ENCODE measurements at regions of chr10 and their contacts with region 1.

Region 1: GRCh38 chr10:5873515-5873995 is 16.1 kb downstream of the ANKRD16 start:
- DNase-seq: peak; percentile 39 to 81 (median 58)
- ATAC-seq: peak; percentile 99
- H3K4me3 ChIP-seq: no peak overlapping the region
- H3K4me3 Mint-ChIP-seq: peak overlapping the region; percentile 12
- H3K27ac ChIP-seq: no peak overlapping the region
- H3K27ac Mint-ChIP-seq: no peak overlapping the region
- H3K4me1 ChIP-seq: no peaks in the 10 kb centered on the region
- H3K4me1 Mint-ChIP-seq: peaks cover 6% of the 10 kb centered on the region
- H3K27me3 ChIP-seq: no peaks in the 10 kb centered on the region
- H3K27me3 Mint-ChIP-seq: no peaks in the 10 kb centered on the region
- CTCF ChIP-seq: peak; percentile 68

Region 2: GRCh38 chr10:5441106-5441505 is 432.4 kb before region 1 on chr10:
- CTCF ChIA-PET with region 1: interaction called, 3 read pairs
- POLR2A ChIA-PET with region 1: no interaction called
- intact Hi-C with region 1: loop called (anchors 1 to 5 kb)
- DNase-seq: no peak
- ATAC-seq: no peak
- H3K4me3 ChIP-seq: no peak overlapping the region
- H3K4me3 Mint-ChIP-seq: no peak overlapping the region
- H3K27ac ChIP-seq: no peak overlapping the region
- H3K27ac Mint-ChIP-seq: no peak overlapping the region
- H3K4me1 ChIP-seq: peaks cover under 1% of the 10 kb centered on the region
- H3K4me1 Mint-ChIP-seq: peaks cover 20% of the 10 kb centered on the region
- H3K27me3 ChIP-seq: no peaks in the 10 kb centered on the region
- H3K27me3 Mint-ChIP-seq: no peaks in the 10 kb centered on the region
- CTCF ChIP-seq: no peak

Region 3: DNA sequence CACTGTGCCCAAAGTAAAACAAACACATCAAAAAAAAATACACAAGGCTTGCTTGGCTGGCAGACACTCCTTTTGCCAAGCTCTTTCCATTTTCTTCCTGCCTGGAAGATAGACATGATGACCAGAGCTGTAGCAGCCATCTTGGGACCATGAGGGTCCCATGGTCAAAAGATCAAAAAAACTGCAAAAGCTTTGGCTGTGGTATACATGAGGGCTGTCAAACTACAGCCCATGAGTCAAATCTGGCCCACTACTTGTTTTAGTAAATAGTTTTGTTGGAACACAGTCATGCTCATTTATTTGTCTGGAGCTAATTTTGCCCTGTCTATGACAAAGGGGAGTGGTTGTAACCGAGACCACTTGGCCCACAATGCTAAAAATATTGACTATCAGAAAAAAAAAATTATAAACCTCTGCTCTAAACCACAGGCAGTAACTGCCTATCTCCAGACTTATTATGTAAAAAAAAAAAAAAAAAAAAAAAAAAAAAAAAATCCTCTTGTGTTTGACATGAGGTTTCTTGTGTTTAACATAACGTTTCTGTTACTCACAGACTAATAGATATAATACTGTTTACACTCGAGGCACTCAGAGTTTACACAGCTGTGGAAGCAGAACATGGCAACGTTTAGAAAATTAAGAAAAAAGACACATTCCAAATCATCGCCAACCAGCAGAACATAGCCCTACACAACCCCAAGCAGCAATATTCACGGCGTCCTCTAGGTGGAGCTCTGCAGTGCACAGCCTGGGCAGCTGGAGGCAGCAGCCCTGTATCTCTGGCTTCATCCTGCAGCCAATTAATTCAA is 244.0 kb before region 1 on chr10:
- CTCF ChIA-PET with region 1: interaction called, 5 read pairs
- POLR2A ChIA-PET with region 1: no interaction called
- intact Hi-C with region 1: loop called (anchors 1 kb)
- DNase-seq: peak; percentile 69 to 90 (median 83)
- ATAC-seq: peak; percentile 98
- H3K4me3 ChIP-seq: no peak overlapping the region
- H3K4me3 Mint-ChIP-seq: peak overlapping the region; percentile 32
- H3K27ac ChIP-seq: no peak overlapping the region
- H3K27ac Mint-ChIP-seq: no peak overlapping the region
- H3K4me1 ChIP-seq: peaks cover 15% of the 10 kb centered on the region
- H3K4me1 Mint-ChIP-seq: peaks cover 15% of the 10 kb centered on the region
- H3K27me3 ChIP-seq: no peaks in the 10 kb centered on the region
- H3K27me3 Mint-ChIP-seq: peaks cover 4% of the 10 kb centered on the region
- CTCF ChIP-seq: peak; percentile 98

Region 4: DNA sequence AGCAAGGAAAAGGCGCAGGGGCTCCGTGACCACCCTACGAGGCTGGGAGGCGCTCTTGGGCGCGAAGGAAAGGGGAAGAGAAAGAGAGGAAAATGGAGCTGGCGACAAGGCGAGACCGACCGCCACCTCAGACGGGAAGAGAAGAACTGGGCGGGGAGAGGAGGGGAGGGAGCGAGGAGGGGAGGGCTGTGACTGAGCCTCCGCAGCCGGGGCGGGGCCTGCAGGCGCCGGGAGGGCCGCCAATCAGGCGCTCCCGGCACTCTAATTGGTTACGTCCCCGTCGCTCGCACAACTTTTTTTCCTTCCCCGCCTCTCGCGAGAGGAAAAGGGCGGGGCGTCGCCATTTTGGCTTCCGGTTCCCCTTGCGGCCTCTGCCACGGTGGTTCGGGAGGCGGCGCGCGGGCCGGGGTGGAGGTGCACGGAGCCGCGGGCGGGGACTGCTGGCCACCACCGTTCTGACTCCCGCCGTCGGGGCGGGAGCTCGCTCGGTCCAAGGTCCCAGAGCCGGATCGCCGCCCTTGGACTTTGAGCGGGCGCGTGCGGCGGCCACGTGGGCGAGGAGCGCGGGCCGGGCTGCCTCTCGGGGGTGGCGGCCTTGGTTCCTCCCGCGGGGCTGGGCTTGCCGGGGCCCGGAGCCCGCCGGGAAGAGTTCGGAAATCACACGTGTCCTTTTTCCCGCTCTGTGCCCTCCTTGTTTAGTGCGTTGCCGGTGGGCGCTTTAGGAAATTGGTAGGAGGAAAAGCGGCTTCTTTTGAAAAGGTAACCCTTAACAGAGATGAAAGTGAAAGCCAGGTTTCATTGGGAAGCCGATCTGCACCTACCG is 60.1 kb before region 1 on chr10 and contains the start of gene GDI2:
- CTCF ChIA-PET with region 1: no interaction called
- POLR2A ChIA-PET with region 1: interaction called, 3 read pairs
- intact Hi-C with region 1: loop called (anchors 1 kb)
- DNase-seq: peak; percentile 92 to 98 (median 96)
- ATAC-seq: peak; percentile 94
- H3K4me3 ChIP-seq: peak within 1 kb of the TSS; percentile 74
- H3K4me3 Mint-ChIP-seq: peak within 1 kb of the TSS; percentile 95
- H3K27ac ChIP-seq: peak within 1 kb of the TSS; percentile 92 to 97
- H3K27ac Mint-ChIP-seq: peak within 1 kb of the TSS; percentile 89
- H3K4me1 ChIP-seq: peaks cover 42% of the 10 kb centered on the region
- H3K4me1 Mint-ChIP-seq: peaks cover 60% of the 10 kb centered on the region
- H3K27me3 ChIP-seq: no peaks in the 10 kb centered on the region
- H3K27me3 Mint-ChIP-seq: no peaks in the 10 kb centered on the region
- CTCF ChIP-seq: no peak
- total RNA-seq, gene GDI2: 78.1 to 82.3 TPM

Region 5: GRCh38 chr10:7722927-7723529 is 1849.5 kb after region 1 on chr10:
- CTCF ChIA-PET with region 1: no interaction called
- POLR2A ChIA-PET with region 1: no interaction called
- intact Hi-C with region 1: no loop called
- DNase-seq: no peak
- ATAC-seq: no peak
- H3K4me3 ChIP-seq: no peak overlapping the region
- H3K4me3 Mint-ChIP-seq: no peak overlapping the region
- H3K27ac ChIP-seq: no peak overlapping the region
- H3K27ac Mint-ChIP-seq: no peak overlapping the region
- H3K4me1 ChIP-seq: no peaks in the 10 kb centered on the region
- H3K4me1 Mint-ChIP-seq: no peaks in the 10 kb centered on the region
- H3K27me3 ChIP-seq: peaks cover 0 to 3% of the 10 kb centered on the region in 2 experiments
- H3K27me3 Mint-ChIP-seq: peaks cover 14% of the 10 kb centered on the region
- CTCF ChIP-seq: no peak